Pancreas (tissue), 10 donors: ENCODE measurements at regions of chr21 and their contacts with region 1.

Region 1: DNA sequence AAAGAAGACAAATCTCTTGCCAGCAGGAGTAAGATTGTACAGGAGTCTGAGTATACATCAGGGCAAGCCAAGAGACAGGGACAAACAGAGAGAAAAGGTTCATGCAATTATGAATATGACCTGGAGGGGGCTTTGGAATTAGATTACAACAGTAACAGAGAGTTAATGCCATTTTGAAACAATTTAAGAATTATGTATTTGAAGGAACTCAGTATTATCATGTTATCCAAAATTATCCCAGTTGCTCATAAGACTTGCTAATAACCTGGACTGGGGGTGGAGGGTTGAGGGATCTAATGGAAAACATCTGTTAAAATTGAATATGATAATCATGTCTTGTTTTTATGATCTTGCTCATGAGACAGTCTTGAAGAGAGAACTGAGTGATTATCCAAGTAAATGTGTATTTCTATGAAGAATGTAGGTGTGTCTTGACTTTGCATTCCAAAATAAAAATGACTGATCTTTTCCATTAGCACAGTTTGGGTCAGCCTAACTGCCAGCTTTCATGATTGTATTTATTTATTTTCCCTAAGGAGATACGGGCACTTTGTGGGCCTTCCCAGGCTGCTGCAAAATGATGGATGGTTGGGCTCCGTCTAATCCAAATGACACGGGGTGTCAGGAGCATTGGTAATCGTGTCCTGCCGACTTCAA is 117.7 kb downstream of the ERG start:
- DNase-seq: no peak
- ATAC-seq: no peak
- H3K4me3 ChIP-seq: no peak overlapping the region
- H3K27ac ChIP-seq: no peak overlapping the region
- H3K4me1 ChIP-seq: no peaks in the 10 kb centered on the region
- H3K27me3 ChIP-seq: peaks cover 0 to 4% (median 0%) of the 10 kb centered on the region in 4 donors
- CTCF ChIP-seq: no peak

Region 2: DNA sequence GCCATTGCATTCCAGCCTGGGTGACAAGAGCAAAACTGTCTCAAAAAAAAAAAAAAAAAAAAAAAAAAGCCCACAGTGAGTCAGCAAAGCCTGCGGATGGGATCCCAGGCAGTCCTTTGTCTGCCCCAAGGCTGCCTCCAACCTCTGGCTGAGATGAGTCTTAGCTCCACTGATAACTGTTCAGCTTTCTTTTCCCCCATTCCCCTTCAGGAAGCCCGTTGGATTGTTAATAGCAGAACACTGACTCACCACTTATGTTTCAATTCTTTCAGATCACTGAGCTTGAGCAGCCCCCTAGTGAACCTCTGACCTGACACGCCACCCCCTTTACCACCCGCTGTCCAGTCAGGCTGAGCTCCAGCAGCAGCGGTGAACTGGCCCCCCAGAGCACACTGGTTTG is 60.1 kb after region 1 on chr21:
- intact Hi-C with region 1: loop called in 1 of 3 experiments (anchors 10 kb)
- DNase-seq: no peak
- ATAC-seq: no peak
- H3K4me3 ChIP-seq: no peak overlapping the region
- H3K27ac ChIP-seq: no peak overlapping the region
- H3K4me1 ChIP-seq: no peaks in the 10 kb centered on the region
- H3K27me3 ChIP-seq: no peaks in the 10 kb centered on the region
- CTCF ChIP-seq: no peak